GM12878 (cell line): ENCODE measurements at regions of chr1 and their contacts with region 1.

Region 1: DNA sequence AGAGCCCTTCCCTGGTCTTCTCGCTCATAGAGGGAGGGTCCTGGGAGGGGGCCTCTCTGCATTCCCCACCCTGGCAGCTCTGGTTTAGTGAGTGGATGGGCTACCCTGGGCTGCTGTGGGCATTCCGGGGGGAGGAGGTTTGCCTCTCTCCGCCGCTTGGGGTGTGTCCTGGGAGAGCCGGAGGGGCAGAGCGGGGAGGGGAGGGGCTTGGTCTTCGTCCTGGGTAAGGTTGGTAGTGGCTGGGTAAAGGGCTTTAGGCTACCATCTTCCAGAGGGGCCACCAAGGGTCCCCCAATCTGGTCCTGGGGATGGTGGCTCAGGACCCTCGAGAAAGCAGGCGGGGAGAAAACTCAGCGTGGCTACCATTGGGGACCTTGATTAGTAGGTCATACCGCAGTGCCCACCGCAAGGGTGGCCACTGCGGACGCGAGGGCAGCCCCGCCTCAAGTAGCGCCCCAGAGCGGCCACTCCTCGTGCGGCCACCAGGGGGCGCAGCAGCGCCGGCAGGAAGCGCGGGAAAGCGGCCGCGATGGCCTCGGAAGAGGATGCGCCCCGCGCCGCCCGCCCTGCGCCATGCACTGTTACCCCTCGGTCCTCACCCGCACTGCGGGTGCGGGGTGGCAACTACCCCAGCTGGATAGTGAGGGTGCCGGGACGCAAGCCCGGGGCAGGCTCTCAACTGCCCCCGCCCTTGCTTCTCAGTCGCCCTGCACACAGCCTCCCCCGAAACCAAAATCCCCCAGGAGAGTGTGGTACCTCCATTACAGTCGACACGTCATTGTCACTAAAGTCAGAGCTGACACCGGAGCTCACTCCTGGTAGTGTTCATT is 44.1 kb upstream of the SLC25A33 start:
- DNase-seq: no peak
- ATAC-seq: peak; percentile 92
- H3K4me3 ChIP-seq: peak overlapping the region; percentile 5; the same call in 1 of the 2 replicates
- H3K27ac ChIP-seq: no peak overlapping the region
- H3K4me1 ChIP-seq: peaks cover 10% of the 10 kb centered on the region; the same call in 1 of the 2 replicates
- H3K27me3 ChIP-seq: no peaks in the 10 kb centered on the region
- CTCF ChIP-seq: peak; percentile 86 to 96 (median 88)
- EP300 ChIP-seq: no peak
- POLR2A ChIP-seq: peak; percentile 35; the same call in 1 of the 2 replicates
- RAD21 ChIP-seq: peak; percentile 73

Region 2: GRCh38 chr1:9270290-9270883 is 224.8 kb before region 1 on chr1:
- CTCF ChIA-PET with region 1: interaction called, 52 read pairs
- POLR2A ChIA-PET with region 1: interaction called, 4 read pairs
- RAD21 ChIA-PET with region 1: interaction called, 44 read pairs
- SMC1A ChIA-PET with region 1: interaction called, 13 read pairs
- in situ Hi-C with region 1: no loop called
- intact Hi-C with region 1: loop called (anchors 1 kb)
- DNase-seq: no peak
- ATAC-seq: no peak
- H3K4me3 ChIP-seq: no peak overlapping the region
- H3K27ac ChIP-seq: no peak overlapping the region
- H3K4me1 ChIP-seq: peaks cover 3% of the 10 kb centered on the region; the same call in 1 of the 2 replicates
- H3K27me3 ChIP-seq: no peaks in the 10 kb centered on the region
- CTCF ChIP-seq: no peak
- EP300 ChIP-seq: no peak
- POLR2A ChIP-seq: no peak
- RAD21 ChIP-seq: no peak

Region 3: GRCh38 chr1:9275567-9276034 is 219.5 kb before region 1 on chr1:
- CTCF ChIA-PET with region 1: interaction called, 52 read pairs
- POLR2A ChIA-PET with region 1: no interaction called
- RAD21 ChIA-PET with region 1: interaction called, 44 read pairs
- SMC1A ChIA-PET with region 1: interaction called, 13 read pairs
- in situ Hi-C with region 1: no loop called
- intact Hi-C with region 1: no loop called
- DNase-seq: peak; percentile 59
- ATAC-seq: peak; percentile 97
- H3K4me3 ChIP-seq: no peak overlapping the region
- H3K27ac ChIP-seq: no peak overlapping the region
- H3K4me1 ChIP-seq: peaks cover 10% of the 10 kb centered on the region
- H3K27me3 ChIP-seq: no peaks in the 10 kb centered on the region
- CTCF ChIP-seq: no peak
- EP300 ChIP-seq: peak; percentile 22 to 41; a peak in 2 of 4 replicates
- POLR2A ChIP-seq: no peak
- RAD21 ChIP-seq: no peak

Region 4: DNA sequence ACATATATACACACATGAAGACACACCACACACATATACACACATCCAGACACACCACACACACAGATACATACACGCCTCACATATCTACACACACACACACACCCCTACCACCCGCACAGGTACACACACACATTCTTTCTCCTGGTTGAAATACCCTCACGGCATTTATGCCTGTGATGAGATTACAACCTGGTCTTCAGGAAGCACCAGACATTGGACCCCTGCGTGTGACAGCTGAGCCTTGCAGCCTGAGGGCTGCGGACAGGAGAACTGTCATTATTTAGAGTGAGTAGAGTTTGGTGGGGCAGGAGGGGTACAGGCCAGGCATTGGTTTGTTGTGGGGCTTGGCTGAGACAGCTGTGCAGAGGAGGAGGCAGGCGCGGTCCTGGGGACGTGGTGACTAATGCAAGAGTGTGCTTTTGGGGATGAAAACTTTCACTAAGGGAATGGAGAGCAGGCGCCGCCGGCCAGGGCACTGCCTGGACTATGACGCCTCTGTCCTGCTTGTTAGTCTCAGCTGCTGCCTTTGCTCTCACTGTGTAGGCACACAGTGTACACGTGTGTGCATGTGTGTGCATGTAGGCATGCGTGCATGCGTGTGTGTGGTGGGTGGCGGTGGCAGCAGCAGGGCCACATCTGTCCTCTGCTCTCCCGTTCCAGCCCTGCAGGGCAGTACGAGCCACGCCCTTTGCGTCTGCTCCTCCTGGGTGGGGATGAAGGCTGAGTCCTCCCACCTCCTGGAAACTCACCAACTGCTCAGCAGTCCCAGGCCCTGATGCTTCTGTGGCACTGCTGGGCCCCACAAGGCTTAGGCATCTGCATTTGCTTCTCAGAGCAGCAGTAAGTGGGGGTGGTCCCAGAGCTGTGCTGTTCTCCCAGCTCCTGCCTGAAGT is 144.9 kb before region 1 on chr1:
- CTCF ChIA-PET with region 1: no interaction called
- POLR2A ChIA-PET with region 1: no interaction called
- RAD21 ChIA-PET with region 1: no interaction called
- SMC1A ChIA-PET with region 1: no interaction called
- in situ Hi-C with region 1: no loop called
- intact Hi-C with region 1: no loop called
- DNase-seq: no peak
- ATAC-seq: no peak
- H3K4me3 ChIP-seq: no peak overlapping the region
- H3K27ac ChIP-seq: no peak overlapping the region
- H3K4me1 ChIP-seq: no peaks in the 10 kb centered on the region
- H3K27me3 ChIP-seq: no peaks in the 10 kb centered on the region; a peak in 1 of 4 replicates
- CTCF ChIP-seq: no peak
- EP300 ChIP-seq: no peak
- POLR2A ChIP-seq: no peak
- RAD21 ChIP-seq: no peak

Region 5: DNA sequence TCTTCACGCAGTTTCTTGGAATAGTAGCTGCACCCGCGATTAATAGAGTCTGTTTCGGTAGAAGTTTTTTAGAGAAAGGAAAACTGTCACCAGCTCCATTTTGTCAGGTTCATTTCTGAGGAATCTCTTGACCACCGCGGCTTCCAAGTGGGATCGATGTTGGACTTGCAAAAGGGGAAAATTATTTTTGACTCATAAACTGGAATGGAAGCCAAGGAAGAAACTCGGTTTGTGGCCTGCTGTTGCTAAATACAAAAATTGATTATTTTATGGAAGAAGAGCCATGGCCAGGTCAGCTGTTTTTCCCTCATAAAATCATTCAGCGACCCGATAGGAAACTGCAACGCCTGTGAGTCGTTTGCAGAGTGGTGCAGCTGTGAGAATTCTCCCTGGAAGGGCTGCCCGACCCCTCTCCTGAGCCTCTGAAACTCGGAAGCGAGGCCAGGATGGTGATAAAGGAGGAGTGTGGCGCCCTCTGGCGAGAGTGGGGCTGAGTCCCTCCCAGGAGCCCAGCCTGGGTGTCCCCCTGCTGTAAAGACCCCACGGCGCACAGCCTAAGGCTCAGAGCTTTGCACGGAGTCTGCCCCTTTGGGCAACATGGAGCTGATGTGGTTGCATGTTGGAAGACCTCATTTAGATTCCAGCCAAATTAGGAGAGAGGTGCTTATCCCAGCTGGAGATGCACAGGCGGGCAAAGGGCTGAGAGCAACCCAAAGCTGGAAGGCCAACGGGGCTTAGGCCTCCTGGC is 39.5 kb before region 1 on chr1:
- CTCF ChIA-PET with region 1: interaction called, 14 read pairs
- POLR2A ChIA-PET with region 1: no interaction called
- RAD21 ChIA-PET with region 1: interaction called, 3 read pairs
- SMC1A ChIA-PET with region 1: interaction called, 10 read pairs
- in situ Hi-C with region 1: no loop called
- intact Hi-C with region 1: no loop called
- DNase-seq: no peak
- ATAC-seq: peak; percentile 94
- H3K4me3 ChIP-seq: no peak overlapping the region
- H3K27ac ChIP-seq: no peak overlapping the region
- H3K4me1 ChIP-seq: no peaks in the 10 kb centered on the region
- H3K27me3 ChIP-seq: no peaks in the 10 kb centered on the region; a peak in 1 of 4 replicates
- CTCF ChIP-seq: peak; percentile 83 to 87 (median 84)
- EP300 ChIP-seq: no peak
- POLR2A ChIP-seq: no peak
- RAD21 ChIP-seq: peak; percentile 91

Region 6: GRCh38 chr1:9481048-9481447 is 14.1 kb before region 1 on chr1:
- CTCF ChIA-PET with region 1: interaction called, 10 read pairs
- POLR2A ChIA-PET with region 1: no interaction called
- RAD21 ChIA-PET with region 1: no interaction called
- SMC1A ChIA-PET with region 1: interaction called, 3 read pairs
- in situ Hi-C with region 1: no loop called
- intact Hi-C with region 1: no loop called
- DNase-seq: no peak
- ATAC-seq: no peak
- H3K4me3 ChIP-seq: no peak overlapping the region
- H3K27ac ChIP-seq: no peak overlapping the region
- H3K4me1 ChIP-seq: no peaks in the 10 kb centered on the region; the same call in 1 of the 2 replicates
- H3K27me3 ChIP-seq: peaks cover 0 to 2% of the 10 kb centered on the region in 2 experiments; a peak in 1 of 4 replicates
- CTCF ChIP-seq: no peak
- EP300 ChIP-seq: no peak
- POLR2A ChIP-seq: no peak
- RAD21 ChIP-seq: no peak

Region 7: DNA sequence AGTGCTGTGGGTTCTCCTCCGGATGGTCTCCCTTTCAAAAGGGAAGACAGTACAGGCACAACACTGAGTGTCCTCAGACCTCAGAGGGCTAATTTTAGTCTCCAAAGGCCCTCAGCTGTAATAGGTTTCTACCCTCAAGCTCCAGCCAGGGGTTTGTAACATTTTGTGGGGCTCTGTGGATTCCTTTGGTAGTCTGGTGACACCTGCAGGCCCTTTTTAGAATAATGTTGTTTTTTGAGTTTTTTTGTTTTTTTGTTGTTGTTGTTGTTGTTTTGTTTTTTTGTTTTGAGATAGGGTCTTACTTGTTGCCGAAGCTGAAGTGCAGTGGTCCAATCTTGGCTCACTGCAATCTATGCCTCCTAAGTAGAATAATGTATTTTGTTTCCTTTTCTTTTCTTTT is 78.6 kb after region 1 on chr1:
- CTCF ChIA-PET with region 1: interaction called, 34 read pairs
- POLR2A ChIA-PET with region 1: no interaction called
- RAD21 ChIA-PET with region 1: interaction called, 10 read pairs
- SMC1A ChIA-PET with region 1: interaction called, 7 read pairs
- in situ Hi-C with region 1: no loop called
- intact Hi-C with region 1: loop called (anchors 1 kb)
- DNase-seq: no peak
- ATAC-seq: 0 out of 3 replicates have a peak, but pooled peaks have one; percentile 27
- H3K4me3 ChIP-seq: no peak overlapping the region
- H3K27ac ChIP-seq: no peak overlapping the region
- H3K4me1 ChIP-seq: no peaks in the 10 kb centered on the region
- H3K27me3 ChIP-seq: no peaks in the 10 kb centered on the region
- CTCF ChIP-seq: peak; percentile 21 to 39 (median 35); a peak in 4 of 6 replicates
- EP300 ChIP-seq: no peak
- POLR2A ChIP-seq: no peak
- RAD21 ChIP-seq: peak; percentile 60

Region 8: DNA sequence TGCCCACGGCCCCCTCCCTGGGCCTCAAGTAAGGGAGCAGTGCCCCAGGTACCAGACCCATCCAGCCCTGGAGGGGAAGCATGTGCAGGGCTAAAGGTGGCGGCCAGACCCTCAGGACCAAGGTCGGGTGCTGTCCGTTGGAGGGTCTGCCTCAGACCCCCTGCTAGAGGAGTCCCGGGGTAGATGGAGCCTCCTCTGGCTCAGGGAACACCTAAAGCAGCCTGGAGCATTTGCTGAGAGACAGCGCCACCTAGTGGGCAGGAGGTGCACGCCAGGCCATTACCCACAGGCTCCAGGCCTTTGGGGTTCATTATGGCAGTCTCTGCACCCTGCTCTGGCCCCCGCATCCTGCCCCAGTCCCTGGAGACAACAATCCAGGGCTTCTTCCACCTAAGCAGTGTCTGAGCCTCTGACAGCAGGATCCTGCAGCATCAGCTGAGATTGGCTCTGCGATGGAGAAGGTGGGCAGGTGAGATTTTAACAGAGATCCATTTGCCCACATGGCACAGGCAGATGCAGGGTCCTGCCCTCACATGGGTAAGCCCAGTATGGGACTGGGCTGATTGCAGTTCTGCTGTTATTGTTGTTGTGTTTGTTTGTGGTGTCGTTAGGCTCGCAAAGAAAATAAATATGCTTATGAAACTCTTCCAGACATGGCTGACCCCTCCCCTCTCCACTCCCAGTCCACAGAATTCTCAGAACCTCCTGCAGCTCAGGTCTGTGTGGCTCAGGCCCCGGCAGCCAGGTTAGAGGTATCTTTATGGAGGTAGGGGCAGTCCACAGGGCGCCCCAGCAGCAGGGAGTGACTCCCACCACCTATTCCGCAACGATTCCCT is 372.5 kb after region 1 on chr1:
- CTCF ChIA-PET with region 1: interaction called, 5 read pairs
- POLR2A ChIA-PET with region 1: no interaction called
- RAD21 ChIA-PET with region 1: interaction called, 3 read pairs
- SMC1A ChIA-PET with region 1: no interaction called
- in situ Hi-C with region 1: no loop called
- intact Hi-C with region 1: loop called (anchors 10 kb)
- DNase-seq: peak; percentile 36
- ATAC-seq: peak; percentile 90
- H3K4me3 ChIP-seq: no peak overlapping the region
- H3K27ac ChIP-seq: no peak overlapping the region
- H3K4me1 ChIP-seq: peaks cover 22% of the 10 kb centered on the region
- H3K27me3 ChIP-seq: no peaks in the 10 kb centered on the region
- CTCF ChIP-seq: peak; percentile 94 to 98 (median 98); a peak in 5 of 6 replicates
- EP300 ChIP-seq: no peak
- POLR2A ChIP-seq: no peak
- RAD21 ChIP-seq: peak; percentile 97